PC-3 (cell line): ENCODE measurements at regions of chr11 and their contacts with region 1.

Region 1: DNA sequence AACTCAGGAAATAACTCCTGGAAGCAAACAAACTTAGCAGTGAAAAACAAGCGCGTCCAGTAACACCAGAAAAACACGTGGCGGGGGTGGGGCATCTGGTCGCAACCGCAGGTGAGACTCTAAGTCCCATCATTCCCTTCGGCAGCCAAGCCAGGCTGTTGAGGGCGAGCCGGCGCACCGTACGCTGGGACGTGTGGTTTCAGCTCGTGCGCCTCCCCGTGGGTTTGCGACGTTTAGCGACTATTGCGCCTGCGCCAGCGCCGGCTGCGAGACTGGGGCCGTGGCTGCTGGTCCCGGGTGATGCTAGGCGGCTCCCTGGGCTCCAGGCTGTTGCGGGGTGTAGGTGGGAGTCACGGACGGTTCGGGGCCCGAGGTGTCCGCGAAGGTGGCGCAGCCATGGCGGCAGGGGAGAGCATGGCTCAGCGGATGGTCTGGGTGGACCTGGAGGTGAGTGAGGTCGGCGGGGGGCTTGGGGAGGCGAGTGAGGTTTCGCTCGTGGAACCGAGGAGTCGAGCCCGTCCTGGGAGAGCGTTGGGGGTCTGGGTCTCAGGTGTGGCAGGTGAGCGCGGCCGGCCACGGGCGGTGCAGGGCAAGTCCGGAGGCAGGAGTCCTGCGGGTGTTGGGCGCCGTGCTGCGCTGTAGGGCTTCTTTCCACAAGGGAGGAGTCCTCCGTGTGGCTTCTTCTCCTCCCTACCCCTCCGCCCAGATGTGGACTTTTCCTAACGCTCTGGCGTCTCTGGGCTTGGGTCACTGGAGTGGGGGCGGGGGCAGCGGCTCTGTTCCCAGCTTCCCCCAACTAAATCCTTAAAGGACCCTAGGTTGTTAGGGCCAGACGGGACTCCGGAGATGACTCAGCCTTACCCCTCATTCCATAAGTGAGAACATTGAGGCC is at the start of gene REXO2:
- DNase-seq: peak; percentile 99
- ATAC-seq: peak; percentile 94
- H3K4me3 ChIP-seq: peak within 1 kb of the TSS; percentile 97
- H3K27ac ChIP-seq: peak within 1 kb of the TSS; percentile 33
- H3K4me1 ChIP-seq: peaks cover 31% of the 10 kb centered on the region
- H3K27me3 ChIP-seq: no peaks in the 10 kb centered on the region
- CTCF ChIP-seq: peak; percentile 32; the same call in 1 of the 2 replicates
- total RNA-seq, gene REXO2: 145 and 181 TPM in 2 replicates

Region 2: GRCh38 chr11:114563077-114563476 is 123.6 kb after region 1 on chr11:
- CTCF ChIA-PET with region 1: no interaction called
- POLR2A ChIA-PET with region 1: no interaction called
- intact Hi-C with region 1: loop called (anchors 2 kb)
- DNase-seq: peak; percentile 88
- ATAC-seq: peak; percentile 89
- H3K4me3 ChIP-seq: peak overlapping the region; percentile 43
- H3K27ac ChIP-seq: peak overlapping the region; percentile 95
- H3K4me1 ChIP-seq: peaks cover 18% of the 10 kb centered on the region
- H3K27me3 ChIP-seq: no peaks in the 10 kb centered on the region
- CTCF ChIP-seq: no peak